K562 (cell line): ENCODE measurements at regions of chr6 and their contacts with region 1.

Region 1: GRCh38 chr6:163180874-163181541 is 233.5 kb upstream of the QKI start:
- DNase-seq: peak; percentile 23 to 73 (median 46)
- ATAC-seq: peak; percentile 97
- H3K4me3 ChIP-seq: no peak overlapping the region
- H3K27ac ChIP-seq: peak overlapping the region; percentile 46; the same call in 1 of the 3 replicates
- H3K4me1 ChIP-seq: peaks cover 0 to 14% of the 10 kb centered on the region in 2 experiments; a peak in 3 of 5 replicates
- H3K27me3 ChIP-seq: peaks cover 6 to 24% of the 10 kb centered on the region in 2 experiments; a peak in 4 of 5 replicates
- CTCF ChIP-seq: peak; percentile 83 to 91 (median 86)
- EP300 ChIP-seq: peak; percentile 96
- POLR2A ChIP-seq: no peak
- RAD21 ChIP-seq: peak; percentile 95 to 97

Region 2: GRCh38 chr6:163218361-163218894 is 37.4 kb after region 1 on chr6:
- CTCF ChIA-PET with region 1: no interaction called
- POLR2A ChIA-PET with region 1: no interaction called
- in situ Hi-C with region 1: no loop called
- intact Hi-C with region 1: no loop called
- DNase-seq: no peak
- ATAC-seq: no peak
- H3K4me3 ChIP-seq: no peak overlapping the region
- H3K27ac ChIP-seq: no peak overlapping the region
- H3K4me1 ChIP-seq: no peaks in the 10 kb centered on the region
- H3K27me3 ChIP-seq: peaks cover 9 to 33% of the 10 kb centered on the region in 2 experiments; a peak in 3 of 5 replicates
- CTCF ChIP-seq: no peak
- EP300 ChIP-seq: no peak
- POLR2A ChIP-seq: no peak
- RAD21 ChIP-seq: no peak

Region 3: GRCh38 chr6:163404825-163405265 is 223.8 kb after region 1 on chr6:
- CTCF ChIA-PET with region 1: no interaction called
- POLR2A ChIA-PET with region 1: no interaction called
- in situ Hi-C with region 1: no loop called
- intact Hi-C with region 1: loop called (anchors 5 kb)
- DNase-seq: no peak
- ATAC-seq: peak; percentile 32
- H3K4me3 ChIP-seq: no peak overlapping the region
- H3K27ac ChIP-seq: no peak overlapping the region
- H3K4me1 ChIP-seq: no peaks in the 10 kb centered on the region
- H3K27me3 ChIP-seq: peaks cover 0 to 4% of the 10 kb centered on the region in 2 experiments; a peak in 2 of 5 replicates
- CTCF ChIP-seq: no peak
- EP300 ChIP-seq: no peak
- POLR2A ChIP-seq: no peak
- RAD21 ChIP-seq: no peak

Region 4: GRCh38 chr6:163554663-163555062 is 373.7 kb after region 1 on chr6:
- CTCF ChIA-PET with region 1: no interaction called
- POLR2A ChIA-PET with region 1: no interaction called
- in situ Hi-C with region 1: no loop called
- intact Hi-C with region 1: loop called (anchors 5 kb)
- DNase-seq: peak; percentile 47 to 71 (median 54)
- ATAC-seq: peak; percentile 91
- H3K4me3 ChIP-seq: no peak overlapping the region
- H3K27ac ChIP-seq: no peak overlapping the region
- H3K4me1 ChIP-seq: no peaks in the 10 kb centered on the region
- H3K27me3 ChIP-seq: no peaks in the 10 kb centered on the region
- CTCF ChIP-seq: peak; percentile 73 to 78 (median 73)
- EP300 ChIP-seq: no peak
- POLR2A ChIP-seq: no peak
- RAD21 ChIP-seq: peak; percentile 58 to 83

Region 5: DNA sequence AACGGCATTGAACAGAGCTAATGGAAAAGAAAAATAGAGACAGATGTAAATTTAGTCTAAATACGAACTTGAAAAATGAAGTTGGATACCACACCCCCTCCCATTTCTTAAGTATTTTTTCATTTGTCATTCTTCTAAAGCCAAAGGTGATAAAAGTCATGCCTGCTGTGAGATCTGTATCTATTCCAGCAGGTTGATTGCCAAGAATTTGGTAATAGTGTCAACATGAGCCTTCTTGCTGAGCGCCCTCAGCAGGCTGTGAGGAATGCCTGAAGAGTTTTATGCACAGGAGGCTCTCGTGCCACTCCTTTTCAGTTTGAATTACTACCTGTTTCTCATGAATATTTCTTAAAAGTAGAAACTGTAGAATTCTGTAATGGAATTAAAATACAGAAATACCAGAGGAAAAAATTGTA is 398.9 kb after region 1 on chr6:
- CTCF ChIA-PET with region 1: no interaction called
- POLR2A ChIA-PET with region 1: no interaction called
- in situ Hi-C with region 1: no loop called
- intact Hi-C with region 1: loop called (anchors 2 kb)
- DNase-seq: peak in 3 of 4 experiments; percentile 25 to 70 (median 39)
- ATAC-seq: peak; percentile 71
- H3K4me3 ChIP-seq: no peak overlapping the region
- H3K27ac ChIP-seq: peak overlapping the region; percentile 75
- H3K4me1 ChIP-seq: peaks cover 6 to 38% of the 10 kb centered on the region in 2 experiments
- H3K27me3 ChIP-seq: no peaks in the 10 kb centered on the region
- CTCF ChIP-seq: peak; percentile 32 to 54 (median 46); a peak in 4 of 6 replicates
- EP300 ChIP-seq: peak; percentile 63; the same call in 1 of the 2 replicates
- POLR2A ChIP-seq: no peak
- RAD21 ChIP-seq: peak in 1 of 2 experiments; percentile 59

Region 6: DNA sequence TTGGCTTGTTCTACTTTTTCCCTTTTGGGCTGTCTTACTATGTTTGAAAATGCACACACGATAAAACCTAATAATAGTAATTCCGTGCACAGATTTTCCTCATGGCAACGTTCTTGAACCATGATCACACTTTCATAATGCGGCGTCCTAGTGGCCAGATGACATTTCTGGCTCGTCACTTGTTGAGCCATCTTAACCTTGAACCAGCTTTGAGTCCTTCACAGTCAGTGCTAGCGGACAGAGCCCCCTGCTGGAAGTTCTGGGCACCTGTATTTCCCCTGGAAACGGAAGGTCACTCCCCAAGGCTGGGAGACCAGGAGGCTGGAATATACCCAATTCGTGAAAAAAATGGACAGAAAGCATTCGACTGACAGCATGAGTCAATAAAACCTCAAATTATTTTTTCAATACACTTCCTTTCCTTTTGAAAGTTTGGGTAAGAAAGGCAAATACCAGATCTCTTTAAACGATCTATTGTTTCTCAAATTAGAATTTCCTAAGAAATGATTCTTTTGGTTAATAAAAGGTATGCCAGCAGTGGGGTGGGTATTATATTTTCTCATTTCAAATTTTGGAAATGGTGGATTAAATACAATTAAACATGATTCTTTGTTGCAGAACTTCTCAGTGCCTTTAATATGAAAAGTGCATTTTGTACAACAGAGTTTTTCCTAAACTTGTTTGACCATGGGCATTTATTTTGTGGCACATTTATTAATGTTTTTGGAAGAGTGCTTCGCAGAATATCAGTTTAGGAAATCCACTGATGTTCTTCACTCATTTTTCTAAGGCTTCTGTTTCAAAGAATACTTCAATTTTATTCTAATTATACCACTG is 775.8 kb after region 1 on chr6:
- CTCF ChIA-PET with region 1: no interaction called
- POLR2A ChIA-PET with region 1: interaction called, 4 read pairs
- in situ Hi-C with region 1: loop called (anchors 10 kb)
- intact Hi-C with region 1: loop called (anchors 1 kb)
- DNase-seq: peak; percentile 88 to 92 (median 90)
- ATAC-seq: peak; percentile 99
- H3K4me3 ChIP-seq: no peak overlapping the region
- H3K27ac ChIP-seq: no peak overlapping the region
- H3K4me1 ChIP-seq: no peaks in the 10 kb centered on the region
- H3K27me3 ChIP-seq: peaks cover 26 to 36% of the 10 kb centered on the region in 2 experiments
- CTCF ChIP-seq: peak; percentile 95 to 98 (median 97)
- EP300 ChIP-seq: no peak
- POLR2A ChIP-seq: no peak
- RAD21 ChIP-seq: peak; percentile 96 to 97

Region 7: DNA sequence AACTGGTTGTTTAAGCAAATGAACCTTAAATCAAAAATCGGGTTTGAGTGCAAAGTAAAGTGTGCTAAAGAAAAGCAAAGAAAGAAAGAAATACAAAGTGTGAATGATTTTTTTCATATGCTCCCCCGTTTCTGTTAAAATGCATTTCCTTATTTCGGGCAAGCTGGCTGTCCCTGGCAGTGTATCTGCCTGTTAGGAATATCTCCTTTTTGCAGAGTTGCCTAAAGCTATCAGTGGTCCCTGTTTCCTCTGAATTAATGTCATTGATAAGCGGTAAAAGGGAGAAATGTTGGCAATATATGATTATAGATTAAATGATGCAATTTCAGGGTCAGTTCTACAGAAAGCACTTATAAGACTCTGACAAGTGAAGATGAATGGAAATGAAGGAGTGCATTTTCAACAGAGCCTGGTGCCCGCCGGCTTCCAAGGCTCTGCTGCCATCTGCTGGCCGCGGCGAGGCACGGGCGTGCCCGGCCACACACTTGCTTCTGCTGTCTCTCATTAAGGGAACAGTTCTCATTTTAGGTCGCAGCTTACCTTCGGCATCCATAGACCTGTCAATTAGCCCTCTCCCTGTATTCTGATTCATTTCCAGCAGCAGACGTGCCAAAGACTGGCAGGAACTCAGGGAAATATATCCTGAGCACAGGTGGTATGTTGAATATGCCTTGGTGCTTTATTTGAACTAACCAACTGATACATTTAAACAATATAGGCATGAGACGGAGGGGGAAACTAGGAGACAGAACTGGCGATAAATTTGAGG is 1746.5 kb after region 1 on chr6:
- CTCF ChIA-PET with region 1: no interaction called
- POLR2A ChIA-PET with region 1: no interaction called
- in situ Hi-C with region 1: no loop called
- intact Hi-C with region 1: loop called (anchors 5 kb)
- DNase-seq: peak; percentile 48 to 65 (median 58)
- ATAC-seq: peak; percentile 98
- H3K4me3 ChIP-seq: no peak overlapping the region
- H3K27ac ChIP-seq: no peak overlapping the region
- H3K4me1 ChIP-seq: no peaks in the 10 kb centered on the region
- H3K27me3 ChIP-seq: no peaks in the 10 kb centered on the region
- CTCF ChIP-seq: peak; percentile 78 to 92 (median 85)
- EP300 ChIP-seq: no peak
- POLR2A ChIP-seq: no peak
- RAD21 ChIP-seq: peak; percentile 95